AG04449 (cell line): ENCODE measurements at regions of chr18 and their contacts with region 1.

Region 1: DNA sequence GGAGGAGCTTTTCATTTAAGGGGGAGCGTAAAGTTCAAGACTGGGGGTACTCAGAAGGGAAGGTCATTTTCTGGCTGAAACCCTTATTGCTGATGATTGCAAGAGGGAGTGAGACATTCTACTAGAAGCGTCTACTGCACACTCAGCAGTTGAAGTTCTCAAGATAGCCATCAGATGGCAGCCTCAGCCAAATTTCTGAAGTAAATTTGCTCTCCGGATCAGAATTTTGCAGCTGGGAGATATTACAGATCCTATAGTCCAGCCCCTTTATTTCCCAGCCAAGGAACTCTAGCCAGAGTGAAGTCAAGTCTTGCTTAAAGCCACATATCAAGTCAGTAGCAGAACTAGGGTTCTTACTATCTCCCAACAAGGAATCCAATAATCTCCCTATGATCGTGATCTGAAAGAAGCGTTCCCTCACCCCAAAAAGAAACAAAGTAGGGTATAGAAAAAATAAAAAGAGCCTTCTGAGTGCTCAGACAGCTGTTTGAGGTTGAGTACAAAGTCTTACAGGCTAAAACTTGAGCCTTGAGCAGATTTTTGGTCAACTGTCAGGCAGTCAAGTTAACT is 24.0 kb downstream of the RAX start:
- DNase-seq: no peak
- H3K4me3 ChIP-seq: no peak overlapping the region
- CTCF ChIP-seq: peak; percentile 65

Region 2: DNA sequence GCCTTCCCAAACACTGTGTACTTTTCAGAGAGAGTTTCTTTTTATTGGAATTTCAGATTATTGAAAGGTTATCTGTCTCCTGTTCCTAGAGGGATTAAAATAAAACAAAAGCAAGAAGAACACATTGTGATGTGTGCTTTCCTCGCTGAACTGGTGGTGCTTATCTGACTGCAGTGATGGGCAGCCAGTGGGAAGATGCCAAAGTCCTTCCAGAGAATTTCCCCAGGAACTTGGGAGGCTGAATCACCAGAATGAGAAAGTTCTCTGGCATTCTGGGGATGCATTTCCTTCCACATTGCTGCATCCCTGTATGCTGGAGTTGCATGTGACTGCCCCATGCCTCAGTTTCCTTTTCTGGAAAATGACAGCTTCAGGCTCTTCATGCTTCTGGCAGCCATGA is 163.5 kb before region 1 on chr18:
- CTCF ChIA-PET with region 1: interaction called, 11 read pairs
- POLR2A ChIA-PET with region 1: no interaction called
- DNase-seq: peak; percentile 17
- H3K4me3 ChIP-seq: no peak overlapping the region
- CTCF ChIP-seq: no peak

Region 3: DNA sequence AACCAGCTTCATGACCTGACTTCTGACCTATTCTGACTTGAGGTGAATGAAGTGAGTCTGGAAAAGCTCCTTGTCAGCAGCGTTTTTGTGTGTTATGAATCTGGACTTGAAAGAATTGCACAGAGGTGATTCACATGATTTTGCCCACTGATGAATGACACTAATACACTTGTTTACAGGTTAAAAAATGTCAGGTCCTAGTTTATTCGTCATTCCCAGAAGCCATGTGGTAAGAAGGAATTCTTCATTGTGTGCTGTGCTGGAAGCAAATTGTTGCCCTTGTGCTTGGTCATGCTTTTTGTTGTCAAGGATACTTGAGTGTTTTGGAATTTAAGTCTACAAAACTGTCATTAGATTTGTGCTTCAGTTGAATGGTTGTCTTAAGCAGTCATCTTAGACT is 94.1 kb before region 1 on chr18:
- CTCF ChIA-PET with region 1: no interaction called
- POLR2A ChIA-PET with region 1: no interaction called
- DNase-seq: peak; percentile 78
- H3K4me3 ChIP-seq: no peak overlapping the region
- CTCF ChIP-seq: no peak

Region 4: DNA sequence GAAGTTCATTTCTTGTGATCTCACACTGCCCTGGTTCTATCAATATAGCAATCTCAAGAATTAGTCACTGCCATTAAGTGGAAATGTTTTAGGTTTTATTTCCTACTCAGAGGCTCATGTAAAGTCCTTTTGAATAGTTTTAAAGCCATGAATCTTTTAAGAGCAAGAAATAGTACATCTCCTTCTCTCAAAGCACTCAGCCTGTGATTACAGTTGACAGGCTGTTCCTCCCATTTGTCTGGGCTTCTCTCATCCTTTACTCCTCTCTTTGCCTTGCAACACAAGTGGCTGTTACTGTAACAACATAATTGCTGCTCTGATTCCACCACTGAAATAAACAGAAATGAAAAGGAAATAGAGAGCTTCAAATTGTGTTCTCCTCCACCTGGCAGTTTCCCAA is 10.9 kb before region 1 on chr18:
- CTCF ChIA-PET with region 1: interaction called, 29 read pairs
- POLR2A ChIA-PET with region 1: no interaction called
- DNase-seq: no peak
- H3K4me3 ChIP-seq: no peak overlapping the region
- CTCF ChIP-seq: no peak

Region 5: DNA sequence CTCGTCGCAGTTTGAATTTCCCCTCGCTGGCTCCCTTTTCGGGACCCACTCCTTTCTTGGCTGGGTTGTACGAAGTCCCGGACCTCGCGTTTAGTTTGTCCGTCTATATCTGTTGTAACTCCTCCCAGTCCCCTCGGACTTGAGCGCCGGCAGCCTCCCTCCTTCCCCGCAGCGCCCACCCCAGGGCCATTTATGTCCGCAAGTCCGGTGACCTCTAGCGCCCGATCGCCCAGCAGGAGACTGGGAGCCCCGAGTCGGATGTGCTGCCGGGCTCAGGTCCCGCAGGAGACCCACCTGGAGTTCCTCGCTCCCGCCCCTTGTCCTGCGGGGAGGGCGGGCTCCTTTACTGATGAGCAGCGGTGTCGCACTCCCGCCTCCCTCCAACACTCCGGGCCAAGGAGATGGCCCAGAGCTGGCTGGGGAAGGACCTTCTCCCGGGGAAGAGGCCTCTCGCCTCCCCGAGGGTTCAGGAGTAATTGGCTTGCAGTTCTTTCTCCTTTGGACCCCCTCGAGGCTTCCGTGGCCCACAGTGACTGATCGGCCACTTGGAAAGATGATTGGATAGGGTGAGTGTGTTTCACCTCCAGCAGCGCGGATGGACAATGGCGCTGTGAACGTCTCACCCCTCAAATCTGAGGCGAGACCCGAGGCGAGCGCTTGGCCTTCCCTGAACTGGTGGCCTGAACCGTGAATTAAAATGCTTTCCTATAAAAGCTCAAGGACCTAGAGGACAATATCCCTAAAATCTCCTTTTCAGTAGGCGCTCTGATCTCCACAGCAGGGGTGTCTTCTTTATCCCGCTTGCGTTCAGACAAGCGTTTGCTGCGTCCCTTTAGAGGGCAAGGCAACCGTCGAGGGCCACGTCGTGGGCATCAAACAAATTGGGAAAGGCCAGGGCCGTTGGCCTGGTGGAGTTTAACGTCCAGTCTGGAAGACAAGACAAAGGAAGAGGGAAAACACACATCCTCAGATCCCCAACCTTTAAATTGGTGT is 24.9 kb after region 1 on chr18:
- CTCF ChIA-PET with region 1: interaction called, 18 read pairs
- POLR2A ChIA-PET with region 1: no interaction called
- DNase-seq: no peak
- H3K4me3 ChIP-seq: no peak overlapping the region
- CTCF ChIP-seq: no peak

Region 6: DNA sequence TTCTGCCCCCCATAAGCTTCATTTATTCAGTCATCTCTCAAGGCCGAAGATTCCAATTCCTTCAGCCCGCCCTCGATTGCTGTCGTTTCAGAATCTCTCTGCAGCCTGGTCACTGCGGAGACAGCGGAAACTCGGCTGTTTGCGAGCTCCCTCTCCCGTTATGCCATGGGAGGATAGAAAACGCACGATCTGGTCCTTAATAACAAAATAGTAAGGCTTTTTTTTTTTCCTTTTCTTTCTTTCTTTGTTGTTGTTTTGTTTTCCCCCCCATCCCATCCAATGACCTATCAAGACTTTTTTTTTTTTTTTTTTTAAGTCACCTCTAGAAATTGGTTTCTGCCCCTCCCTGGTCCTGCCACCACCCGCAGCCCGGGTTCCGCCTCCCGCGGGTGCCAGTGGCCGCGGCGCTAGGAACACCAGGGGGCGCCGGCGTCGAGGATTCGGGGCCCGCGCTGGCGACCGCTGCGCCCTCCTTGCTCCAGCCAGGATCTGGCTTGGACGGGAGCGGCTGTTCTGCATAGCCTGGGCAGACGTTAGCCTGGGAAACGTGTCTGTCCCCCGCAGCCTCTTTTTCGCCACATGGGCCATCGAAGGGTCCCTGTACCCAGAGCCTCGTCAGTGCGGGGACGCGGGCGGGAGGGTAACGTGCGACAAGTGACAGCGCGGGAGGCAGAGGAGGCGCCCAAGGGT is 59.1 kb after region 1 on chr18:
- CTCF ChIA-PET with region 1: interaction called, 44 read pairs
- POLR2A ChIA-PET with region 1: interaction called, 3 read pairs
- DNase-seq: no peak
- H3K4me3 ChIP-seq: peak overlapping the region; percentile 48
- CTCF ChIP-seq: peak; percentile 97